Activated T-helper 1 cell treated with anti-CD3 and anti-CD28 coated beads, Interleukin-12 subunit alpha, Interleukin-12 subunit beta, Interleukin-2, Interleukin-4 antibody, amounts not matched to agents 30 ng/mL and 10 ng/mL and 1 ng/mL, durations not matched to agents 14 hours and 24 hours and 36 hours (primary cell): ENCODE measurements at regions of chr12 and their contacts with region 1.

Region 1: GRCh38 chr12:57846577-57847319 is at the start of gene CTDSP2:
- DNase-seq: peak; percentile 85
- H3K4me3 Mint-ChIP-seq: peak within 1 kb of the TSS; percentile 85
- H3K27ac Mint-ChIP-seq: peak within 1 kb of the TSS; percentile 68
- H3K4me1 Mint-ChIP-seq: peaks cover 43% of the 10 kb centered on the region
- H3K27me3 Mint-ChIP-seq: peaks cover 18% of the 10 kb centered on the region
- total RNA-seq, gene CTDSP2: 96.5 and 99.6 TPM in 2 replicates

Region 2: GRCh38 chr12:57751788-57752667 is 94.7 kb before region 1 on chr12 and contains the start of gene CDK4:
- intact Hi-C with region 1: loop called (anchors 1 kb)
- DNase-seq: peak; percentile 98
- H3K4me3 Mint-ChIP-seq: peak within 1 kb of the TSS; percentile 94
- H3K27ac Mint-ChIP-seq: peak within 1 kb of the TSS; percentile 95
- H3K4me1 Mint-ChIP-seq: peaks cover 67% of the 10 kb centered on the region
- H3K27me3 Mint-ChIP-seq: peaks cover 3% of the 10 kb centered on the region
- total RNA-seq, gene CDK4: 218 and 227 TPM in 2 replicates

Region 3: GRCh38 chr12:57782608-57783465 is 63.9 kb before region 1 on chr12 and contains the start of gene TSFM:
- intact Hi-C with region 1: loop called (anchors 2 kb)
- DNase-seq: peak; percentile 93
- H3K4me3 Mint-ChIP-seq: peak within 1 kb of the TSS; percentile 98
- H3K27ac Mint-ChIP-seq: peak within 1 kb of the TSS; percentile 98
- H3K4me1 Mint-ChIP-seq: peaks cover 44% of the 10 kb centered on the region
- H3K27me3 Mint-ChIP-seq: no peaks in the 10 kb centered on the region
- total RNA-seq, gene TSFM: 63.5 and 68.6 TPM in 2 replicates

Region 4: GRCh38 chr12:57865090-57865751 is 18.5 kb after region 1 on chr12:
- intact Hi-C with region 1: loop called (anchors 1 kb)
- DNase-seq: peak; percentile 44
- H3K4me3 Mint-ChIP-seq: peak overlapping the region; percentile 86
- H3K27ac Mint-ChIP-seq: peak overlapping the region; percentile 83
- H3K4me1 Mint-ChIP-seq: peaks cover 11% of the 10 kb centered on the region
- H3K27me3 Mint-ChIP-seq: peaks cover 10% of the 10 kb centered on the region

Region 5: DNA sequence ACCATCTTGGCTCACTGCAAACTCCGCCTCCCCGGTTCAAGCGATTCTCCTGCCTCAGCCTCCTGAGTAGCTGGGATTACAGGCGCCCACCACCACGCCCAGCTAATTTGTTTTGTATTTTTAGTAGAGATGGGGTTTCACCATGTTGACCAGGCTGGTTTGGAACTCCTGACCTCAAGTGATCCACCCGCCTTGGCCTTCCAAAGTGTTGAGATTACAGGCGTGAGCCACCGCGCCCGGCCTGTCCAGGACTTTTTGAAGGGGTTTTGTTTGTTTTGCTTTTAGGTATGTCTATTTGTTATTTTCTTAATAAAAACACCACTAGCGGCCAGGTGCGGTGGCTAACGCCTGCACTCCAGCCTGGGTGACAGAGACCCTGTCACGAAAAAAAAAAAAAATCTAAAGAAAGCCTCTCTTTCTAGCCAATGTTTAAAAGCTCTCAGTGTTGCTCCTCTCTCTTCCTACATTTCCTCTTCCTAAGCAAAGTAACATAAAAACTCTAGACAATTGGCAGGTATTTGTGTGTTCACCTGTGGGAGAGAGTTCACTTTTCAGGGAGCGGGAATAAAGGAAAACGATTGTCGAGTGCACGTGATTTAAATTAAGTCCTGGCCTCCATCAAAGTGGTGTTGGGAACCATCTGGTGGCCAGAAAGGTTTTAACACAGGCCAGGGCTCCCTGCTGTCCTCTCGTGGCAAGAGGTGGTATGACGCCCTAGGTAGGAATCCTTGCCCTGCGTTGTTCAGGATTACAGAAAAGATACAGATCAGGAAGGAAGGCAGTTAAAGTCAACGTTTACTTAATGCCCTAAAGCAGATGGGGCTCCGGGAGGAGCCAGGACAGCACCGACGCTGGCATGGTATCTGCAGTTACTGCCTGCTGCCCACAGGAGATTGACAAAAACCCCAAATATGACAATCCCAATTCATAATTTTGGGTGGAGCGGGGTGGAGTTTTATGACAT is 58.4 kb after region 1 on chr12:
- intact Hi-C with region 1: loop called (anchors 1 kb)
- DNase-seq: peak; percentile 70
- H3K4me3 Mint-ChIP-seq: peak overlapping the region; percentile 32
- H3K27ac Mint-ChIP-seq: peak overlapping the region; percentile 0
- H3K4me1 Mint-ChIP-seq: peaks cover 16% of the 10 kb centered on the region
- H3K27me3 Mint-ChIP-seq: peaks cover 21% of the 10 kb centered on the region

Region 6: GRCh38 chr12:57941165-57941894 is 94.6 kb after region 1 on chr12 and contains the start of gene ATP23:
- intact Hi-C with region 1: loop called (anchors 1 kb)
- DNase-seq: peak; percentile 86
- H3K4me3 Mint-ChIP-seq: peak within 1 kb of the TSS; percentile 89
- H3K27ac Mint-ChIP-seq: peak within 1 kb of the TSS; percentile 95
- H3K4me1 Mint-ChIP-seq: peaks cover 46% of the 10 kb centered on the region
- H3K27me3 Mint-ChIP-seq: no peaks in the 10 kb centered on the region
- total RNA-seq, gene ATP23: 7.3 and 8.7 TPM in 2 replicates